BJ (cell line): ENCODE measurements at regions of chr10 and their contacts with region 1.

Region 1: DNA sequence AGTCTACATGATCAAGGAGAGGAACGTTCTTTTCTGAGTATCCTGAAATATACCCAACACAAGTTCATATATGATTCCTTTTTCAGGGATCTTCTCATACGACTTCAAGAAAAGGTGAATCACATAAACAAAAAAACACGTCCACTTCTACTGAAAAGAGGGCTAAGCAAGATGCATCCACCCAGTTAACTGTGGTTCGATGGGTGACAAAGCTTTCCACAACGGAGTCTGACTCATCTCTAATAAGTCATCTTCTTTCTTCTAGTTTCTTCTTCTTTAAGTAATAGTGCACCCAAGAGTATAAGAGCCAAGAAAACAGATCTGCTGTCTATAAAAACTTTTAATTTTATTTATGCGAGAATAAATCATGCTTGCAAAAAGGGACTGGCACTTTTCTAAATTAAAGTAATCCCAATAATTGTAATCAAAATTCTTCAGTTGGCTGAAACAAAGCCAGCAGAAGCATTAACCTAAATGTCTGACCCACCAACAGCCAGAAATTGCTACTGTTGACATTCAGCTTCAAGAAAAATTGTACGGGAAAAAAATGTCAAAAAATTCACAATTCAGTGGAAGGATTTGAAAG is 146.9 kb upstream of the ANK3 start:
- DNase-seq: peak; percentile 7
- H3K4me3 ChIP-seq: no peak overlapping the region
- H3K27me3 ChIP-seq: no peaks in the 10 kb centered on the region
- CTCF ChIP-seq: no peak

Region 2: DNA sequence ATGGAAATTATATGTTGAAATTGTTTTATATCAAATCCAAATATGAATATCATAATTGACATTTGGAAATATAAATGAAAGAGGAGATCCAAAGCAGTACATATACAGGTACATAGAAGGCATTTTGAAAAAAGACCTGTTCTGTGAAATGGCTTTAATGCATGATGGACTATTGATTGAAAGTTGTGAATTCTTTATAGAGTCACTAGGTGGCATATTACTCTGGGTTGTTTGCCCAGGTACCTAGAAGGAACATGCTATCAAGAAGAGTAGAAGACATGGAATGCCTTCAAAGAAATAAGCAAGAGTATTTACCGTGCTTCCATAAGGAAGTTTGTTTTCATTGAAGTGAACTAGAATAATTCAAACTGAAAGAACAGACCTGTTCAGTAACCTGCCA is 13.1 kb after region 1 on chr10:
- CTCF ChIA-PET with region 1: no interaction called
- POLR2A ChIA-PET with region 1: no interaction called
- DNase-seq: no peak
- H3K4me3 ChIP-seq: no peak overlapping the region
- H3K27me3 ChIP-seq: no peaks in the 10 kb centered on the region
- CTCF ChIP-seq: peak; percentile 8; the same call in 1 of the 2 replicates

Region 3: DNA sequence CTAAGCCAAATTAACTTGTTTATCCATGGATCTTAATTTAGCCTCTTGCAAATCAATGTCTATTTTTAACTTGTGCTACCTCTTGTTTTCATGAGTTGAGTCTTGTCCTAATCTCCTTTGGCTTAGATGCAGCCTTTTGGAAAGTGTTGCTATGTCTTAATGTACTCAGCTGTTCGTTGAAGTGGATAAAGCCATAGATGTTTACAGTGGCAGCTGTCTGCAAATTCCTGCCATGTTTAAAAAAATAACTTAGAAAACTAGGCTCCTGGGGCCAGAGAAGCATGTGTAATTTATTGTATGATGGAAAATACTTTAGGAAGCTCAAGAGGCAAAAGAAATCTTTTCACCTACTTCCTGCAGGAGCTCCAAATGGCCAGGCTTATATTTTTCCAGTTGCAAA is 660.4 kb after region 1 on chr10:
- CTCF ChIA-PET with region 1: no interaction called
- POLR2A ChIA-PET with region 1: interaction called, 13 read pairs
- DNase-seq: no peak
- H3K4me3 ChIP-seq: no peak overlapping the region
- H3K27me3 ChIP-seq: peaks cover 1% of the 10 kb centered on the region
- CTCF ChIP-seq: no peak